Breast epithelium (tissue), 4 donors: ENCODE measurements at regions of chr9 and their contacts with region 1.

Region 1: GRCh38 chr9:17802249-17802857 is 223.5 kb downstream of the SH3GL2 start:
- DNase-seq: no peak
- H3K4me3 ChIP-seq: no peak overlapping the region
- H3K27ac ChIP-seq: no peak overlapping the region
- H3K4me1 ChIP-seq: no peaks in the 10 kb centered on the region
- H3K27me3 ChIP-seq: no peaks in the 10 kb centered on the region
- CTCF ChIP-seq: peak in 1 of 3 donors; percentile 16
- POLR2A ChIP-seq: no peak

Region 2: DNA sequence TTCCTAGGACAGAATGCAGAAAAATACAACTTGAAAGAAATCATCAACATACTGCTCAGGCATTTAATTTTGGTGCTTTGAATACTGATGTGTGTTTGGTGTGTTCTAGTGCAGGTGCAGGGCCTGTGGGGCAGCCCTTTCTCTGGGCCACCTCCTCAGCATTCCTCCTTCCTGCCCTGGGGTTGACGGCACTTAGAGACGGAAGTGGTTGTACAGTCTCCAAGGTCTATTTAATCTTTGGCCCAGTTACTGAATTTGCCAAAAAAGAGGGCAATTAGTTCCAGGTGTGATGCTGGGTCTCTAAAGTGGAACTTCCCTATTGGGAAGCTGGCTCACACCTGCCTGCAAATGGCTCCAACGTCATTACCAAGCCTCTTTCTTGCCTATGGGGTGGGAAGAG is 45.6 kb after region 1 on chr9:
- intact Hi-C with region 1: no loop called
- DNase-seq: no peak
- H3K4me3 ChIP-seq: no peak overlapping the region
- H3K27ac ChIP-seq: no peak overlapping the region
- H3K4me1 ChIP-seq: no peaks in the 10 kb centered on the region
- H3K27me3 ChIP-seq: no peaks in the 10 kb centered on the region
- CTCF ChIP-seq: no peak
- POLR2A ChIP-seq: no peak

Region 3: GRCh38 chr9:18331808-18332209 is 529.5 kb after region 1 on chr9:
- intact Hi-C with region 1: loop called (anchors 10 kb)
- DNase-seq: no peak
- H3K4me3 ChIP-seq: no peak overlapping the region
- H3K27ac ChIP-seq: peak overlapping the region in 1 of 2 donors; percentile 25
- H3K4me1 ChIP-seq: no peaks in the 10 kb centered on the region
- H3K27me3 ChIP-seq: no peaks in the 10 kb centered on the region
- CTCF ChIP-seq: no peak
- POLR2A ChIP-seq: no peak

Region 4: GRCh38 chr9:19481971-19482404 is 1679.6 kb after region 1 on chr9:
- intact Hi-C with region 1: loop called (anchors 5 kb)
- DNase-seq: no peak
- H3K4me3 ChIP-seq: no peak overlapping the region
- H3K27ac ChIP-seq: no peak overlapping the region
- H3K4me1 ChIP-seq: no peaks in the 10 kb centered on the region
- H3K27me3 ChIP-seq: no peaks in the 10 kb centered on the region
- CTCF ChIP-seq: no peak
- POLR2A ChIP-seq: no peak